ENCODE measurements at regions of chr12 and their contacts with region 1.

Region 1: GRCh38 chr12:3885277-3886094 is 12.3 kb upstream of the PARP11 start:
- DNase-seq: peak in 8 of 10 donors; percentile 12 to 76 (median 58)
- ATAC-seq: peak in 1 of 2 donors; percentile 44
- H3K4me3 Mint-ChIP-seq: peak overlapping the region in 1 of 10 donors; percentile 5
- H3K27ac Mint-ChIP-seq: peak overlapping the region in 8 of 10 donors; percentile 9 to 65 (median 14)
- H3K4me1 Mint-ChIP-seq: peaks cover 4 to 13% (median 6%) of the 10 kb centered on the region in 4 donors
- H3K27me3 Mint-ChIP-seq: peaks cover 0 to 3% (median 0%) of the 10 kb centered on the region in 5 donors

Region 2: GRCh38 chr12:3752741-3753486 is 132.6 kb before region 1 on chr12 and contains the start of gene CRACR2A:
- POLR2A ChIA-PET with region 1: no interaction called
- DNase-seq: peak; percentile 80 to 92 (median 86)
- ATAC-seq: peak; percentile 83 to 84
- H3K4me3 Mint-ChIP-seq: peak within 1 kb of the TSS; percentile 79 to 97 (median 94)
- H3K27ac Mint-ChIP-seq: peak within 1 kb of the TSS; percentile 92 to 100 (median 98)
- H3K4me1 Mint-ChIP-seq: peaks cover 42 to 76% (median 68%) of the 10 kb centered on the region in 4 donors
- H3K27me3 Mint-ChIP-seq: no peaks in the 10 kb centered on the region
- polyA plus RNA-seq, gene CRACR2A: 7.7 to 17.2 (median 16.3) TPM

Region 3: DNA sequence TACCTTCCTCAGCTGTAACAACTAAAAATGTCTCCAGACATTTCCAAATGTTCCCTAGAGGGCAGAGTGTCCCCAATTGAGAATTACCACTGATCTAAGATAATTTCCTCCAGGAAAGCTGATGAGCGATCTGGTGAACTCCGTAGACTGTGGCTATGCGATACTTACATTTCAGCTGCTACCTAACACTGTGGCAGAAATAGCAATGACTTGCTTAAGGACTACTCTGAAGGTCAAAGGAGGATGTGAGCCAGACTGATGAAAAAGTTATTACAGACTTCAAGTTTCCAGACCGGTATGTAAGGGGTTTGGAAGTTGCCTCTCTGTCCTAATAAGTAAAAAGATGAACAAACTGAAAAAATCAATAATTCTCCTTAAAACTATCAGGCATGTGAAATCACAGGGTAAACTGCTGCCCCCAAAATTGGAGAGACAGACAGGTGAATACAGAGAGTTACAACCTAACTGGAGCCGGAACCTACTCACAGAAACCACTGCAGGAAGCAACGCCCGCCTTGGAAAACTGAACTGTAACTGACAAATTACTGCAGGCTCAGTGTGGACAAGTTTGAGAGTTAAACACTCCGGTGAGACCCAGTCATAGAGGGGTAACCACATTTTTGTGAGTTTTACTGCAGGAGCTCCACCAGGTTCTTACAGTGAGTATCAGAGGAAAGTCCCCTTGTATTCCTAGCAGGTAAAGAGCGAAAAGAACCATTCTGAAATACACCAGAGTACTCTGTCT is 47.8 kb after region 1 on chr12:
- POLR2A ChIA-PET with region 1: no interaction called
- DNase-seq: peak in 2 of 10 donors; percentile 10 to 21
- ATAC-seq: peak; percentile 44 to 60
- H3K4me3 Mint-ChIP-seq: peak overlapping the region in 7 of 10 donors; percentile 2 to 79 (median 42)
- H3K27ac Mint-ChIP-seq: peak overlapping the region in 9 of 10 donors; percentile 32 to 95 (median 65)
- H3K4me1 Mint-ChIP-seq: peaks cover 27 to 64% (median 58%) of the 10 kb centered on the region in 4 donors
- H3K27me3 Mint-ChIP-seq: peaks cover 0 to 3% (median 0%) of the 10 kb centered on the region in 5 donors

Region 4: GRCh38 chr12:3947781-3948180 is 62.3 kb after region 1 on chr12:
- POLR2A ChIA-PET with region 1: interaction called, 10 read pairs
- DNase-seq: peak in 4 of 10 donors; percentile 25 to 85 (median 72)
- ATAC-seq: peak; percentile 65 to 86
- H3K4me3 Mint-ChIP-seq: peak overlapping the region in 9 of 10 donors; percentile 4 to 62 (median 51)
- H3K27ac Mint-ChIP-seq: peak overlapping the region; percentile 90 to 98 (median 96)
- H3K4me1 Mint-ChIP-seq: peaks cover 34 to 68% (median 62%) of the 10 kb centered on the region in 4 donors
- H3K27me3 Mint-ChIP-seq: no peaks in the 10 kb centered on the region

Region 5: GRCh38 chr12:3988519-3989448 is 103.3 kb after region 1 on chr12:
- POLR2A ChIA-PET with region 1: interaction called, 12 read pairs
- DNase-seq: peak in 7 of 10 donors; percentile 21 to 73 (median 44)
- ATAC-seq: peak; percentile 92 to 93
- H3K4me3 Mint-ChIP-seq: peak overlapping the region; percentile 42 to 80 (median 66)
- H3K27ac Mint-ChIP-seq: peak overlapping the region; percentile 80 to 96 (median 91)
- H3K4me1 Mint-ChIP-seq: peaks cover 14 to 39% (median 33%) of the 10 kb centered on the region in 4 donors
- H3K27me3 Mint-ChIP-seq: no peaks in the 10 kb centered on the region

Region 6: DNA sequence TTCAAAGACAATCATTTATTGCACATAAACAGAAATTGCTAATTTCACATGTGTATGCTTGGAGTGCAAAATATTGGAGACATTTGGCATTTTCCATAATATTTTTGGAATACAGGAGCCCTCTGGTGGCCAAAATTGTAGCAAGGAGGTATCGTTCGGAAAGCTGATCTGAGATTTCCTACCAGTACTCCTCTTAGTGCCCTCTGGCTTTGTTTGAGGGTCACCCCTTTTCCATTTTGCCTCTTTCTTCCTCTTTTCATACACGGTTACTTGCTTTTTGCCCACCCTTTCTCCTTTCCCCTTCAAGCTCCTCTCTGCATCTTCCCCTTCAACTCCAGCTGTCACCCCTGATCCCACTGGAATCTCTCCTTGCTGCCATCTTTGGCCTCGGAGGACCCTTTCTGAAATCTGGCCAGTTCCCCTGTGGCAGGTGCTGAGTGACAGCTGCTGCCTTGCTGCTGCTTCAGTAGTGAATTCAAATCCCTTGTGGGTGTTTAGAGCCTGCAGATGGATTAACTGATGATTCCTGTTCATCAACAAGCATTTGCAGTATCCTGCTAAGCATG is 152.3 kb after region 1 on chr12:
- POLR2A ChIA-PET with region 1: interaction called, 13 read pairs
- DNase-seq: peak in 4 of 10 donors; percentile 20 to 31 (median 30)
- ATAC-seq: no peak
- H3K4me3 Mint-ChIP-seq: no peak overlapping the region
- H3K27ac Mint-ChIP-seq: peak overlapping the region in 1 of 10 donors; percentile 18
- H3K4me1 Mint-ChIP-seq: peaks cover 0 to 2% (median under 1%) of the 10 kb centered on the region in 4 donors
- H3K27me3 Mint-ChIP-seq: no peaks in the 10 kb centered on the region